Aorta (tissue), 5 donors: ENCODE measurements at regions of chr17 and their contacts with region 1.

Region 1: GRCh38 chr17:61251939-61252896 is 147.4 kb upstream of the TBX2 start:
- DNase-seq: peak; percentile 96 to 97
- ATAC-seq: peak; percentile 95
- H3K4me3 ChIP-seq: no peak overlapping the region
- H3K27ac ChIP-seq: peak overlapping the region; percentile 80 to 98
- H3K4me1 ChIP-seq: peaks cover 8 to 9% of the 10 kb centered on the region in 2 donors
- H3K27me3 ChIP-seq: no peaks in the 10 kb centered on the region

Region 2: GRCh38 chr17:61235827-61236197 is 16.4 kb before region 1 on chr17:
- intact Hi-C with region 1: loop called in 1 of 2 experiments (anchors 2 kb)
- DNase-seq: no peak
- ATAC-seq: no peak
- H3K4me3 ChIP-seq: no peak overlapping the region
- H3K27ac ChIP-seq: no peak overlapping the region
- H3K4me1 ChIP-seq: peaks cover 2% of the 10 kb centered on the region in 2 donors
- H3K27me3 ChIP-seq: no peaks in the 10 kb centered on the region

Region 3: GRCh38 chr17:61314368-61315078 is 62.3 kb after region 1 on chr17:
- intact Hi-C with region 1: loop called in 1 of 2 experiments (anchors 10 kb)
- DNase-seq: peak; percentile 82 to 84
- ATAC-seq: peak; percentile 91
- H3K4me3 ChIP-seq: no peak overlapping the region
- H3K27ac ChIP-seq: peak overlapping the region; percentile 67 to 94
- H3K4me1 ChIP-seq: peaks cover 0 to 5% of the 10 kb centered on the region in 2 donors
- H3K27me3 ChIP-seq: no peaks in the 10 kb centered on the region